Caco-2 (cell line): ENCODE measurements at regions of chr7 and their contacts with region 1.

Region 1: DNA sequence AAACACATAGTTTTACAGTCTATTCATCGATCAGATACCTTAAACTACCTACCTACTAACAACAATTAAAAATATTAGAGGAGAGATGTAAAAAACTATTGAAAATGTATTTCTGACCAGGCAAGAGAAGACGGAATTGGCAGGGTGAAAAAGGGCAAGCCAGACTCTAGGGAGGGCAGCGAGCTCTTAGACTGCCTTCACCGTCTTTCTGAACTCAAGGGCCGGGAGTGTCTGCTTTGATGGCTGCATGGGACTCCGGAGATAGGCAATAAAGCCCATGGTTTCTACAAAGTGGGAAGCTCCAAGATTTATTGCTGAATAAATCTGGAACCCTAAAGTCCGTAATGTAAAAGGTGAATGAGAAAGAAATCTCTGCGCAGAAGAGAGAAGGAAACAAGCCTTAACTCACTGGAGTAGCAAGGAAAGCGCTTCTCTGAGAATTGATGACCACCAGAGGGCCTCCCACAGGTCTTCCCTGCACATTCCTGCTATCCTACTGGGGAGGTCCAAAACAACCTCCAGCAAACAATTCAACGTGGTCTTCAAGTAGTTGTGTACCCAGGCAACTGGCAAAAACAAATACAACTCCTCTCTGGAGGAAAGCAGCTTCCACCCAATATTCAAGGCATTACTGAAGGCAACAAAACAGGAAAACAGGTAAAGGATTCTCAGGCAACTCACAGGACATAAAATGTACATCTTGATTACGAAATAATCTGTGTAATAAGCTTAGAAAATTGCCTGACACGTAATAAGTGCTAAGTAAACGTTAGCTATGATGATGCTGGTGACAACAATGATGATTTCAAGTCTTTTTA is 181.3 kb downstream of the SDK1 start:
- DNase-seq: peak; percentile 65 to 75
- H3K4me3 ChIP-seq: no peak overlapping the region
- H3K4me3 Mint-ChIP-seq: no peak overlapping the region
- H3K27ac Mint-ChIP-seq: no peak overlapping the region
- H3K4me1 ChIP-seq: peaks cover 16% of the 10 kb centered on the region; the same call in 1 of the 2 replicates
- H3K4me1 Mint-ChIP-seq: peaks cover 18% of the 10 kb centered on the region
- H3K27me3 ChIP-seq: no peaks in the 10 kb centered on the region
- H3K27me3 Mint-ChIP-seq: no peaks in the 10 kb centered on the region
- CTCF ChIP-seq: peak; percentile 76 to 79

Region 2: DNA sequence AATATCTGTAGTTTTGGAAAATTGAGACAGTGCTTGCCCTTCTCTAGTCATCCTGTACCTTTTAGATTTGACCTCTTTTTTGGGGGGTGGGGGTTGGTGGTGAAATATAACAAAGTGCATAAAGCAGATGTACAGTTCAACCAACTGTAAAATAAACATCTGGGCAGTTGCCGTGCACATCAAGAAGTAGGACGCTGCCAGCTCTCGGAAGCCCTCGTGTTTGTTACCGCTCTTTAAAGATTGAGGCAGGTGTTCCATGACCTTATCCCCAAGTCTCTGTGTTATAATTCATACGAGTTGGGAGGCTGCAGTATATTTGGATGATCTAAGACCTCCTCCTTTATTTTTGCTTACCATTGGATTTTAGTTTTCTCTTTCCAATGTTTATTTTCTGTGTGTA is 126.2 kb before region 1 on chr7:
- CTCF ChIA-PET with region 1: no interaction called
- POLR2A ChIA-PET with region 1: no interaction called
- intact Hi-C with region 1: no loop called
- DNase-seq: no peak
- H3K4me3 ChIP-seq: no peak overlapping the region
- H3K4me3 Mint-ChIP-seq: no peak overlapping the region
- H3K27ac Mint-ChIP-seq: no peak overlapping the region
- H3K4me1 ChIP-seq: no peaks in the 10 kb centered on the region
- H3K4me1 Mint-ChIP-seq: no peaks in the 10 kb centered on the region
- H3K27me3 ChIP-seq: no peaks in the 10 kb centered on the region; the same call in 1 of the 2 replicates
- H3K27me3 Mint-ChIP-seq: peaks cover 6% of the 10 kb centered on the region
- CTCF ChIP-seq: no peak

Region 3: GRCh38 chr7:3520206-3520605 is 37.9 kb after region 1 on chr7:
- CTCF ChIA-PET with region 1: no interaction called
- POLR2A ChIA-PET with region 1: no interaction called
- intact Hi-C with region 1: loop called (anchors 1 kb)
- DNase-seq: peak in 1 of 2 experiments; percentile 29
- H3K4me3 ChIP-seq: no peak overlapping the region
- H3K4me3 Mint-ChIP-seq: no peak overlapping the region
- H3K27ac Mint-ChIP-seq: no peak overlapping the region
- H3K4me1 ChIP-seq: peaks cover 15% of the 10 kb centered on the region
- H3K4me1 Mint-ChIP-seq: peaks cover 15% of the 10 kb centered on the region
- H3K27me3 ChIP-seq: no peaks in the 10 kb centered on the region
- H3K27me3 Mint-ChIP-seq: peaks cover 3% of the 10 kb centered on the region
- CTCF ChIP-seq: no peak

Region 4: DNA sequence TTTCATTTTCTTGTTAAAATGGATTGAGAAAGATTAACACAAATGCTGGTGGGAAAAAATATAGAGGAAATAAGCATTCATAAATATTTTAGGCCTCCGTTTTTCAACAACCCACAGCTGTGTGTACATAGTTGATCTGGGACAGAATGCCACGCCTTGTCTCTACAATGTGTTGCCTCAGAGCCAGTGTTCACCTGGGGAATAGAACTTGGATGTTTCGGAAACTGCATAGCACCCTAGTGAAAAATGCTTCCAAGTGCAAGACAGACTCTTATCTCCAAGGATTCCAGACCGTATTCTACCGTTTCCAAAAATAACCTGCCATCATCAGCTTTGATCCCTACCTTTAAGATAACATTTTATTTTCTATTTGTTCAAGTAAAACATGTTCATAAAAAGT is 79.6 kb after region 1 on chr7:
- CTCF ChIA-PET with region 1: interaction called, 6 read pairs
- POLR2A ChIA-PET with region 1: no interaction called
- intact Hi-C with region 1: loop called (anchors 1 kb)
- DNase-seq: peak; percentile 65 to 70
- H3K4me3 ChIP-seq: no peak overlapping the region
- H3K4me3 Mint-ChIP-seq: no peak overlapping the region
- H3K27ac Mint-ChIP-seq: peak overlapping the region; percentile 87
- H3K4me1 ChIP-seq: peaks cover 43% of the 10 kb centered on the region
- H3K4me1 Mint-ChIP-seq: peaks cover 21% of the 10 kb centered on the region
- H3K27me3 ChIP-seq: no peaks in the 10 kb centered on the region
- H3K27me3 Mint-ChIP-seq: no peaks in the 10 kb centered on the region
- CTCF ChIP-seq: no peak

Region 5: GRCh38 chr7:3575753-3576531 is 93.6 kb after region 1 on chr7:
- CTCF ChIA-PET with region 1: no interaction called
- POLR2A ChIA-PET with region 1: no interaction called
- intact Hi-C with region 1: no loop called
- DNase-seq: no peak
- H3K4me3 ChIP-seq: no peak overlapping the region
- H3K4me3 Mint-ChIP-seq: no peak overlapping the region
- H3K27ac Mint-ChIP-seq: no peak overlapping the region
- H3K4me1 ChIP-seq: no peaks in the 10 kb centered on the region
- H3K4me1 Mint-ChIP-seq: no peaks in the 10 kb centered on the region
- H3K27me3 ChIP-seq: no peaks in the 10 kb centered on the region
- H3K27me3 Mint-ChIP-seq: no peaks in the 10 kb centered on the region
- CTCF ChIP-seq: no peak